ENCODE measurements at regions of chr1 and their contacts with region 1.

Region 1: GRCh38 chr1:156751758-156752757 is 583 bp upstream of the HDGF start:
- DNase-seq: peak; percentile 98
- H3K4me3 Mint-ChIP-seq: peak overlapping the region; percentile 96
- H3K27ac Mint-ChIP-seq: peak overlapping the region; percentile 89
- H3K4me1 Mint-ChIP-seq: peaks cover 40% of the 10 kb centered on the region
- H3K27me3 Mint-ChIP-seq: no peaks in the 10 kb centered on the region

Region 2: GRCh38 chr1:156740679-156741612 is 11.1 kb before region 1 on chr1 and contains the start of gene MRPL24:
- CTCF ChIA-PET with region 1: interaction called, 11 read pairs
- POLR2A ChIA-PET with region 1: interaction called, 107 read pairs
- DNase-seq: peak; percentile 98
- H3K4me3 Mint-ChIP-seq: peak within 1 kb of the TSS; percentile 99
- H3K27ac Mint-ChIP-seq: peak within 1 kb of the TSS; percentile 97
- H3K4me1 Mint-ChIP-seq: peaks cover 66% of the 10 kb centered on the region
- H3K27me3 Mint-ChIP-seq: no peaks in the 10 kb centered on the region
- total RNA-seq, gene MRPL24: 40.3 to 43.8 TPM

Measured in activated CD4-positive, alpha-beta memory T cell treated with anti-CD3 and anti-CD28 coated beads, Interleukin-2, amount 10 ng/mL, durations not matched to agents 7 days and 5 days (primary cell).